Ascending aorta (tissue), 2 donors: ENCODE measurements at regions of chr14 and their contacts with region 1.

Region 1: GRCh38 chr14:89915114-89915878 is 39.2 kb downstream of the EFCAB11 start:
- DNase-seq: peak in 1 of 2 donors; percentile 81
- H3K4me3 ChIP-seq: no peak overlapping the region
- H3K27ac ChIP-seq: no peak overlapping the region
- H3K4me1 ChIP-seq: peaks cover 0 to 23% of the 10 kb centered on the region in 2 donors
- H3K27me3 ChIP-seq: no peaks in the 10 kb centered on the region
- CTCF ChIP-seq: peak; percentile 79 to 98 (median 95)

Region 2: DNA sequence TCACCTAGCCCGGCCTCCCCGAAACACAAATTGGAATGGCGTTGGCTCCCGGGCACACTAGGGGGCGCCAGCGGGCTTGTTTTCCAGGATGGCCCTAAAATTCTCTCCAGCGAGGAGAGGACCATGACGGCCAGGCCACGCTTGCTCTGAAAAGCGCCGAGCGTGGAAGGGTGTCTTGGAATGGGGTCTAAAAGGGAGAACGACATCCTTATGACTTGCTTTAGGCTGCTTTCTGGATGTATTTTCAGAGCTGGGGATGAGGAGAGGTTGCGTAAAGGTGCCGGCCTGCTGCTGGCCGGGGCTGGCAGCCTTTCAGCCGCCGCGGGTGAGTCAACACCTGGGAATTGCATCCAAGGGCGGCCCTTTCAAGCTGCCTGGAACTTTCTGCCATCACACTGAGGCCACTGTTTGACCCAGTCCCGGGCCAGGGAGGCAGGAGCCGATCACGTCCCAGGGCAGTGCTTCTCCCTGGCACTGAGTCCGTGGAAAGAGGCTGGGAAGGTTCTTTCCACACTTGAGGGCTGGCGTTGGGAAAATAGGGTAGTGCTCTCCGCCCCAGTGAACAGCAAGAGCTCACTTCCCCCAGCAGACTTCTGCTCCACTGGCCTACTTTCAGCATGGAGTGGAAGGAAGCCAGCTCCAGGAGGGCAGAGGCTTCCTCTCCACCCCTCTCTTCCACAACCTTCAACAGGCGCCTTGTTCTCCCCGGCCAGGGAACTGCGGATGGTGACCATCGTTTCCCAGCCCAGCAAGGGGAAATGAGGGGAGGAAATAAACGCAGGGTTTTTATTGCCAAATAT is 874.6 kb before region 1 on chr14:
- intact Hi-C with region 1: loop called (anchors 5 kb)
- DNase-seq: peak; percentile 60 to 95
- H3K4me3 ChIP-seq: peak overlapping the region; percentile 40 to 44
- H3K27ac ChIP-seq: peak overlapping the region; percentile 81 to 88
- H3K4me1 ChIP-seq: peaks cover 0 to 11% of the 10 kb centered on the region in 2 donors
- H3K27me3 ChIP-seq: no peaks in the 10 kb centered on the region
- CTCF ChIP-seq: peak; percentile 94 to 99 (median 96)

Region 3: DNA sequence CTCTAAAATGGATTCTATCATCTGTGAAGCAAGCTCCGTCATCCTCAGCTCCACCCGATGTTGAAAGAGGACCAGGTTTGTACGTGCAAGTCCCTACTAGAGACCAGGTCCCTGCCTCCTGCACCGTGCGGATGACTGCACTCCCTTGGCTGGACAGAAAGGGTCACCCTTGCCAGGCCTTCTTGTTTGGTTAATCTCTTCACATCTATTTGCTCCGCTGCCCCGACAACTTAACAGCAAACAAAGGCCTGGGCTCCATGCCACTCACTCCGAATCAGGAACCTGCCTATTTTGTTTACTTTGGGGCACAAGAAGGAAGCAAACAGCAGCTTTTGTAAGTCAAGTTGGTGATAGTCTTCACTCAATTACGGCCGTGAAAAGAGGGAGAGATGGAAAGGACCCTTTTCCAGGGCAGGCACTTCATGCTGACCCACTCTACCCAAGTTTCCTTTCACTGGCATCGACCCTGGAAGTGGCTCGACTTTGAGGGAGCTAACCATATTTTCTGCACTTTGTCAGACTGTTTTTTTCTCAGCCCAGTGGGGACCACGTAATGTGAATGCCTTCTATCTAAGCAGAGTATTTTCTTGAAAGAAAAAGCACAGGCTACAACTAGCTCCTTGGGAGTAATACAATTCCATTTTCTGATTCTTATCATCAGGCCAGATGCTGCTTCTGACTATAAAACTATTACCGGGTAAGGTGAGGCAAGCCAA is 700.9 kb before region 1 on chr14:
- intact Hi-C with region 1: loop called (anchors 10 kb)
- DNase-seq: peak; percentile 57 to 89
- H3K4me3 ChIP-seq: peak overlapping the region in 1 of 2 donors; percentile 38
- H3K27ac ChIP-seq: peak overlapping the region; percentile 56 to 73
- H3K4me1 ChIP-seq: peaks cover 4 to 40% of the 10 kb centered on the region in 2 donors
- H3K27me3 ChIP-seq: no peaks in the 10 kb centered on the region
- CTCF ChIP-seq: peak in 2 of 3 experiments; percentile 12 to 37

Region 4: DNA sequence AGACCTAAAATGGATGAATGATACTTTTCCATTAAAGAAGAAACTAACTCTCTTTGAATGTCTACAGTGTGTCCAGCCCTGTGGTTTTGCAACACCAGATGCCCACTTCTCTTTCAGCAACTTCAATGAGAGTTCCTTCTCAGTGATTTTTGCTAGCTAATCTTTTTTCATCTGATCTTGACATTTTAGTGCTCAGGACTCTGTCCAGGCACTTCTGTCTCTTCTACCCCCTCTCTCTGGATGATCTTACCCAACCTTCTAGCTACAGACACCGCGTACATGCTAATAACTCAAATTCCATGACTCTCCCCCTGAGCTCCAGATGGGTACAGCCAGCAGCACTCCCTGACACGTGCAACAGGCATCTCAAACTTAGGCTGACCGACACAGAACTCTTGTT is 337.1 kb before region 1 on chr14:
- intact Hi-C with region 1: loop called (anchors 5 kb)
- DNase-seq: no peak
- H3K4me3 ChIP-seq: peak overlapping the region in 1 of 2 donors; percentile 4
- H3K27ac ChIP-seq: peak overlapping the region; percentile 80 to 85
- H3K4me1 ChIP-seq: peaks cover 24 to 33% of the 10 kb centered on the region in 2 donors
- H3K27me3 ChIP-seq: no peaks in the 10 kb centered on the region
- CTCF ChIP-seq: no peak

Region 5: GRCh38 chr14:89813617-89814031 is 101.7 kb before region 1 on chr14:
- intact Hi-C with region 1: loop called (anchors 5 kb)
- DNase-seq: peak in 1 of 2 donors; percentile 82
- H3K4me3 ChIP-seq: peak overlapping the region in 1 of 2 donors; percentile 47
- H3K27ac ChIP-seq: peak overlapping the region; percentile 84 to 89
- H3K4me1 ChIP-seq: peaks cover 0 to 9% of the 10 kb centered on the region in 2 donors
- H3K27me3 ChIP-seq: no peaks in the 10 kb centered on the region
- CTCF ChIP-seq: no peak

Region 6: DNA sequence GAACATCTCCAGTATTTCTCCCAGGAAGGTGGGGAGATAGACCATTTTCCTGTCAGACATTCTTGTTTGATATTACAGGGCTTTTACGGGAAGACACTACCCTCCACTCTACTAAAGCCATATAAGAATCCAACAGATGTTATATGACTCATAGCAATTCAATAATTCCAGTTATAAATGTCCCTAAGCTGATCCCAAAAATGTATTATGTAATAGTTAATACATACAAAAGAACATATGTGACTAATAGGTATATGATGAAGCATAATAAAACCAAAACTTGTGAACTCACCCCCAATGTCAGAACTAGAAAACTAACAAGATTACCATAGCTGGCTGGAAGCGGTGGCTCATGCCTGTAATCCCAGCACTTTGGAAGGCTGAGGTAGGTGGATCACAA is 45.0 kb before region 1 on chr14:
- intact Hi-C with region 1: no loop called
- DNase-seq: no peak
- H3K4me3 ChIP-seq: no peak overlapping the region
- H3K27ac ChIP-seq: no peak overlapping the region
- H3K4me1 ChIP-seq: no peaks in the 10 kb centered on the region
- H3K27me3 ChIP-seq: no peaks in the 10 kb centered on the region
- CTCF ChIP-seq: no peak